Aorta (tissue), 5 donors: ENCODE measurements at regions of chr2 and their contacts with region 1.

Region 1: DNA sequence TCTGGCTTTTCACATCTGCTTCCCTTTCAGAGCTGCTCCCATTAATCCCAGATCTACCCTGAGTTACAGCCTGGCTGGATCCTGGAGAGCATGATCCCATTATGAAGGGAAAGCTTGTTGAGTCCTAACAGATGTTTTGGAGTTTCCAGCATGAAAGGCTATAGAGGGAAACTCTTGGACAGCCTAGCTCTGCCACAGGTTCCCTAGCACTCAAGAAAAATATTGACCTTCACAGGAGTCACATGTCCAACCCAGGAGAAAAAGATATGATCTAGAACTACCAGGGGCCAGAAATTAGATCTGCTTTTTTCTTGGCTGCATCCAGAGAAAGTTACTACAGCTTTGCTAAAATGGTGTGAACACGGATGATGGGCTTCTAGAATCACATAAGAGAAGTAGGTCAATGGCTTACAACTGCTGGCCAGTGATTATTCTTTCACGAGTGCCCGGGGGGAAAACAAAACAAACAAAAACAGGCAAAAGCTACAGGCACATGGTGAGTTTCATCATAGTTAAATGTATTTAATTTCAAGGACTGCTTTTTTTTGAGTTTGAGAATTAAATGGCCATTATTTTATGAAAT is 15.9 kb downstream of the CCDC93 start:
- DNase-seq: no peak
- ATAC-seq: no peak
- H3K4me3 ChIP-seq: no peak overlapping the region
- H3K27ac ChIP-seq: no peak overlapping the region
- H3K4me1 ChIP-seq: no peaks in the 10 kb centered on the region
- H3K27me3 ChIP-seq: no peaks in the 10 kb centered on the region

Region 2: GRCh38 chr2:117794668-117795067 is 203.3 kb before region 1 on chr2:
- intact Hi-C with region 1: no loop called
- DNase-seq: no peak
- ATAC-seq: no peak
- H3K4me3 ChIP-seq: no peak overlapping the region
- H3K27ac ChIP-seq: no peak overlapping the region
- H3K4me1 ChIP-seq: no peaks in the 10 kb centered on the region
- H3K27me3 ChIP-seq: no peaks in the 10 kb centered on the region

Region 3: DNA sequence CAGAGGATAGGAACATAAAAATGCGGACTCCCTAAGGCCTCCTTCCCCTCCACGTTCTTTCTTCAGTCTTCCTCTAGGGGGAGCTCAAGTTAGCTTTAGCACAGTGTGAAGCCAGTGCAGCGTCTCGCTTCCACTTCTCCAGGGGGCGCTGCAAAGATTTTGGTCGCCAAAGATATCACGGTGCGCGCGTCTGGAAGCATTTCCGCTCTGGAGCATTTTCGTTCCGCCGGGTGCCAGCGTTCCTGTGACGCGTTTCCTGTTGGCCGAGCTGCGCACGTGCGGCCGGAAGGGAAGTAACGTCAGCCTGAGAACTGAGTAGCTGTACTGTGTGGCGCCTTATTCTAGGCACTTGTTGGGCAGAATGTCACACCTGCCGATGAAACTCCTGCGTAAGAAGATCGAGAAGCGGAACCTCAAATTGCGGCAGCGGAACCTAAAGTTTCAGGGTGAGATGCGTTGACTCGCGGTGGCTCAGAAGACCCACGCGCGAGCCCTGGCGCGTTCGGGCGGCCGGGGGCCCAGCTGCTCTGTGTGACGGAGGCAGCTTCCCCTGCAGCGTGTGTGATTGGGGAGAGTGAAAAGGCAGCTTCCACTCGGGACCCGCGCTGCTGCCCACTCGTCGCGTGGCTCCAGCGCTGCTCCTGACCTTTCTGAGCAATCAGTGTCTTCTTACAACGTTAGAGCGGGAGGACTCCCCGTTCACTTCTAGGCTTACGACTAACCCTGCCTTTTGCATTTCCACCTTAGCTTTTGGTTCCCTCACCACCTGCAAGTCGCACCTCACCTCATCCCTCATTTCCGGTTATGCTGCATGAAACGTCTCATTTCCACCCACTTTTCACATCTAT is 183.3 kb before region 1 on chr2 and contains the start of gene DDX18:
- intact Hi-C with region 1: loop called (anchors 5 kb)
- DNase-seq: peak; percentile 98 to 99
- ATAC-seq: peak; percentile 100
- H3K4me3 ChIP-seq: peak within 1 kb of the TSS; percentile 67 to 93
- H3K27ac ChIP-seq: peak within 1 kb of the TSS; percentile 17 to 94
- H3K4me1 ChIP-seq: no peaks in the 10 kb centered on the region
- H3K27me3 ChIP-seq: no peaks in the 10 kb centered on the region
- total RNA-seq, gene DDX18: 42.2 to 54.3 TPM

Region 4: GRCh38 chr2:117948615-117949014 is 49.3 kb before region 1 on chr2:
- intact Hi-C with region 1: no loop called
- DNase-seq: no peak
- ATAC-seq: no peak
- H3K4me3 ChIP-seq: no peak overlapping the region
- H3K27ac ChIP-seq: no peak overlapping the region
- H3K4me1 ChIP-seq: no peaks in the 10 kb centered on the region
- H3K27me3 ChIP-seq: no peaks in the 10 kb centered on the region